B cell (primary cell): ENCODE measurements at regions of chr6 and their contacts with region 1.

Region 1: GRCh38 chr6:148677594-148678476 is 69.0 kb upstream of the UST start:
- DNase-seq: peak; percentile 82
- ATAC-seq: peak; percentile 79
- H3K4me3 ChIP-seq: peak overlapping the region in 3 of 5 experiments; percentile 6 to 50 (median 15)
- H3K4me3 Mint-ChIP-seq: peak overlapping the region; percentile 71
- H3K27ac ChIP-seq: peak overlapping the region; percentile 74 to 81
- H3K27ac Mint-ChIP-seq: peak overlapping the region; percentile 88
- H3K4me1 ChIP-seq: peaks cover 56% of the 10 kb centered on the region in 2 donors
- H3K4me1 Mint-ChIP-seq: peaks cover 54% of the 10 kb centered on the region
- H3K27me3 ChIP-seq: no peaks in the 10 kb centered on the region
- H3K27me3 Mint-ChIP-seq: no peaks in the 10 kb centered on the region
- CTCF ChIP-seq: no peak

Region 2: DNA sequence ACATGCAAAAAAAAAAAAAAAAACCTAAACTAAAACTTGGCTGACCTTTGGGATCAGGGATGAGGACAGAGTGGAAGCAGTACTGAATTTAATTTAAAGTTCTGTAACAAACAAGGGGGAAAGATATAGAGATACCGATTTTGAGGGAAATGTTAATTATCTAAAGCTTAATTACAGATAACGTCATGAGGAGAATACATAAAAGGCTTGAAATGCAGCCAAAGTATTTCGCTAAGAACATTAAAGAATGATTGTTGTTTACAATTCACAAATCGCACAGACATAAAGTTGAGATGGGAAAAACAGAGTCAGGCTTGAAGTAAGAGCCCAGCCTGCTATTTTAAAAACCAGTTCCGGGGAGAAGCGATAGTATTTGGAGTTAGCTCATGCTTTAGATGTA is 543.2 kb before region 1 on chr6:
- CTCF ChIA-PET with region 1: no interaction called
- POLR2A ChIA-PET with region 1: no interaction called
- intact Hi-C with region 1: no loop called
- DNase-seq: no peak
- ATAC-seq: no peak
- H3K4me3 ChIP-seq: no peak overlapping the region
- H3K4me3 Mint-ChIP-seq: no peak overlapping the region
- H3K27ac ChIP-seq: no peak overlapping the region
- H3K27ac Mint-ChIP-seq: no peak overlapping the region
- H3K4me1 ChIP-seq: no peaks in the 10 kb centered on the region
- H3K4me1 Mint-ChIP-seq: no peaks in the 10 kb centered on the region
- H3K27me3 ChIP-seq: no peaks in the 10 kb centered on the region
- H3K27me3 Mint-ChIP-seq: peaks cover 16% of the 10 kb centered on the region
- CTCF ChIP-seq: no peak

Region 3: GRCh38 chr6:148635070-148635743 is 42.6 kb before region 1 on chr6:
- CTCF ChIA-PET with region 1: no interaction called
- POLR2A ChIA-PET with region 1: no interaction called
- intact Hi-C with region 1: loop called (anchors 1 kb)
- DNase-seq: no peak
- ATAC-seq: no peak
- H3K4me3 ChIP-seq: no peak overlapping the region
- H3K4me3 Mint-ChIP-seq: no peak overlapping the region
- H3K27ac ChIP-seq: no peak overlapping the region
- H3K27ac Mint-ChIP-seq: no peak overlapping the region
- H3K4me1 ChIP-seq: peaks cover 13 to 15% of the 10 kb centered on the region in 2 donors
- H3K4me1 Mint-ChIP-seq: peaks cover 13% of the 10 kb centered on the region
- H3K27me3 ChIP-seq: no peaks in the 10 kb centered on the region
- H3K27me3 Mint-ChIP-seq: no peaks in the 10 kb centered on the region
- CTCF ChIP-seq: no peak

Region 4: GRCh38 chr6:148693882-148694484 is 16.1 kb after region 1 on chr6:
- CTCF ChIA-PET with region 1: interaction called, 3 read pairs
- POLR2A ChIA-PET with region 1: interaction called, 3 read pairs
- intact Hi-C with region 1: loop called (anchors 2 kb)
- DNase-seq: peak; percentile 69
- ATAC-seq: peak; percentile 97
- H3K4me3 ChIP-seq: peak overlapping the region in 1 of 5 experiments; percentile 27
- H3K4me3 Mint-ChIP-seq: peak overlapping the region; percentile 67
- H3K27ac ChIP-seq: peak overlapping the region; percentile 62 to 76
- H3K27ac Mint-ChIP-seq: peak overlapping the region; percentile 90
- H3K4me1 ChIP-seq: peaks cover 19 to 22% of the 10 kb centered on the region in 2 donors
- H3K4me1 Mint-ChIP-seq: peaks cover 27% of the 10 kb centered on the region
- H3K27me3 ChIP-seq: no peaks in the 10 kb centered on the region
- H3K27me3 Mint-ChIP-seq: no peaks in the 10 kb centered on the region
- CTCF ChIP-seq: no peak